ENCODE measurements at regions of chr10 and their contacts with region 1.

Region 1: GRCh38 chr10:6647811-6648526 is 67.9 kb upstream of the PRKCQ start:
- DNase-seq: peak; percentile 91
- H3K4me3 Mint-ChIP-seq: peak overlapping the region; percentile 12
- H3K27ac Mint-ChIP-seq: peak overlapping the region; percentile 70
- H3K4me1 Mint-ChIP-seq: peaks cover 62% of the 10 kb centered on the region
- H3K27me3 Mint-ChIP-seq: no peaks in the 10 kb centered on the region

Region 2: GRCh38 chr10:6239213-6239991 is 408.6 kb before region 1 on chr10:
- CTCF ChIA-PET with region 1: no interaction called
- intact Hi-C with region 1: no loop called
- DNase-seq: peak; percentile 90
- H3K4me3 Mint-ChIP-seq: no peak overlapping the region
- H3K27ac Mint-ChIP-seq: peak overlapping the region; percentile 60
- H3K4me1 Mint-ChIP-seq: peaks cover 23% of the 10 kb centered on the region
- H3K27me3 Mint-ChIP-seq: no peaks in the 10 kb centered on the region

Region 3: DNA sequence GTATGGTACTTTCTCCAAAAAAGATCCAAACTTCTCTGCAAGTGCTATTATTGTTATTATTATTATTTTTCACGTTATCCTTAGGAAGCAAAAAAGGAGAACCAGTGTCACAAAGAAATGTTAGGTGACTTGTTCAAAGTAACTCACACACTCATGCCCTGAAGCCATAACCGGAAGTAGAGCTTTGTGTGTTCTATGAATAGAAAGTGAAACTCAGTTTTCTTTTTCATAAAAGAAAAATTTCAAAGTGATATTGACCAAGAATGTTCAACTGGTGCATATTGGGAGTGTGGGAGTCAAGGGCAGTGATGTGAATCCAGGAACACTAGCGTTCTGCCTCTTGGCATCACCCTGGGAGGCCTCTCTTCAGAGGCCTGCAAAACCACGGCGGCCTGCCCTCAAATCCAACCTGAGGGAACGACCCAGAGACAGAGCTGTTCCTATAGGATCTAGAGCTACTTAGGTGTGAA is 174.0 kb before region 1 on chr10:
- CTCF ChIA-PET with region 1: interaction called, 4 read pairs
- intact Hi-C with region 1: loop called (anchors 2 kb)
- DNase-seq: peak; percentile 36
- H3K4me3 Mint-ChIP-seq: peak overlapping the region; percentile 71
- H3K27ac Mint-ChIP-seq: peak overlapping the region; percentile 89
- H3K4me1 Mint-ChIP-seq: peaks cover 53% of the 10 kb centered on the region
- H3K27me3 Mint-ChIP-seq: no peaks in the 10 kb centered on the region

Region 4: GRCh38 chr10:6513476-6513875 is 134.5 kb before region 1 on chr10:
- CTCF ChIA-PET with region 1: no interaction called
- intact Hi-C with region 1: loop called (anchors 2 kb)
- DNase-seq: peak; percentile 64
- H3K4me3 Mint-ChIP-seq: peak overlapping the region; percentile 19
- H3K27ac Mint-ChIP-seq: peak overlapping the region; percentile 54
- H3K4me1 Mint-ChIP-seq: peaks cover 72% of the 10 kb centered on the region
- H3K27me3 Mint-ChIP-seq: no peaks in the 10 kb centered on the region

Region 5: GRCh38 chr10:6593241-6593671 is 54.7 kb before region 1 on chr10:
- CTCF ChIA-PET with region 1: interaction called, 11 read pairs
- intact Hi-C with region 1: loop called (anchors 1 kb)
- DNase-seq: peak; percentile 54
- H3K4me3 Mint-ChIP-seq: peak overlapping the region; percentile 55
- H3K27ac Mint-ChIP-seq: peak overlapping the region; percentile 96
- H3K4me1 Mint-ChIP-seq: peaks cover 89% of the 10 kb centered on the region
- H3K27me3 Mint-ChIP-seq: no peaks in the 10 kb centered on the region

Region 6: GRCh38 chr10:6617309-6618076 is 30.5 kb before region 1 on chr10:
- CTCF ChIA-PET with region 1: interaction called, 3 read pairs
- intact Hi-C with region 1: loop called (anchors 1 kb)
- DNase-seq: peak; percentile 57
- H3K4me3 Mint-ChIP-seq: no peak overlapping the region
- H3K27ac Mint-ChIP-seq: peak overlapping the region; percentile 84
- H3K4me1 Mint-ChIP-seq: peaks cover 74% of the 10 kb centered on the region
- H3K27me3 Mint-ChIP-seq: no peaks in the 10 kb centered on the region

Region 7: DNA sequence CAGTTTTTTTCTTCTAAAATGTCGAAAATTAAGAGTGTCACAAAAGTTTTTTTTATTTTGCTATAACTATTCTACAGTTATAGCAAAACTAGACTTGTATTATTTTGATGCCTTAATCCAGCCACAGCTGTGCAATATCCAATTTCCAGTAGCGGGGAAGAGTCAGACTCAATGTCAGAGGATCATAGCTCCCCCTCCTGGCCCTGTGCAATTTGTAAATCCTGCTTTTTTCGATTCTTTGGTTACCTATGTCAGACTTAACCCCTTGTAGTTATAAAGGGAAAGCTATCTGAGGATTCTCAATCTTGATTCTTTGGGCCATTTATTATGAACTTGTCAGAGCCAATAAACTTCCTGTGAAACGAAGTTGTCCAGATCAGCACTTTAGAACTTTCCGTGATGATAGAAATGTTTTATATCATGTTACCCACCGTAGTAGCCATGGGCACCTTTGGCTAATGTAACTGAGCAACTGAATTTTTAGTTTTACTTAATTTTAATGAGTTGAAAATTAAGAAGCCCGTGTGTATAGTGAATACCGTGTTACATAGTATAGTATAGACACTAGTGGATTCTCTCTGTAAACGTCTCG is 19.8 kb after region 1 on chr10:
- CTCF ChIA-PET with region 1: interaction called, 18 read pairs
- intact Hi-C with region 1: no loop called
- DNase-seq: peak; percentile 77
- H3K4me3 Mint-ChIP-seq: no peak overlapping the region
- H3K27ac Mint-ChIP-seq: no peak overlapping the region
- H3K4me1 Mint-ChIP-seq: peaks cover 14% of the 10 kb centered on the region
- H3K27me3 Mint-ChIP-seq: no peaks in the 10 kb centered on the region

Region 8: DNA sequence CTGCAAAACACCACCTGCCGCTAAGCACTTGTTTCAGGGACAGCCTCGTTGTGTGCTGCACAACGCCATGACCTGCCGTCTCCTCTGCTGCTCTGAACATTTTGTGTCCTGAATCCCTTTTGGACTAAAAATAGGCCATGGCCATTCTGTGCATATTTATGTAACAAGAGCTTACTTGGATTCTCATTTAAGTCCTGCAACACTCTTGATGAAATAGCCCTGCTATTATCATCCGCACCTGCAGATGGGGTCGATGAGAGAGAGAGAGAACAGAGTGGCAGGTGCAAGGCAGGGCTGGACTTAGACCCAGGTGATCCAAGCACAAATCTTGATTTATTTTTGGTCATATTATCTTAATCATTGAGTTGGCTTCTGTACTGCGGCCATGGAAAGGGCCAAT is 53.3 kb after region 1 on chr10:
- CTCF ChIA-PET with region 1: no interaction called
- intact Hi-C with region 1: no loop called
- DNase-seq: peak; percentile 23
- H3K4me3 Mint-ChIP-seq: no peak overlapping the region
- H3K27ac Mint-ChIP-seq: no peak overlapping the region
- H3K4me1 Mint-ChIP-seq: no peaks in the 10 kb centered on the region
- H3K27me3 Mint-ChIP-seq: no peaks in the 10 kb centered on the region